ENCODE measurements at regions of chr20 and their contacts with region 1.

Region 1: DNA sequence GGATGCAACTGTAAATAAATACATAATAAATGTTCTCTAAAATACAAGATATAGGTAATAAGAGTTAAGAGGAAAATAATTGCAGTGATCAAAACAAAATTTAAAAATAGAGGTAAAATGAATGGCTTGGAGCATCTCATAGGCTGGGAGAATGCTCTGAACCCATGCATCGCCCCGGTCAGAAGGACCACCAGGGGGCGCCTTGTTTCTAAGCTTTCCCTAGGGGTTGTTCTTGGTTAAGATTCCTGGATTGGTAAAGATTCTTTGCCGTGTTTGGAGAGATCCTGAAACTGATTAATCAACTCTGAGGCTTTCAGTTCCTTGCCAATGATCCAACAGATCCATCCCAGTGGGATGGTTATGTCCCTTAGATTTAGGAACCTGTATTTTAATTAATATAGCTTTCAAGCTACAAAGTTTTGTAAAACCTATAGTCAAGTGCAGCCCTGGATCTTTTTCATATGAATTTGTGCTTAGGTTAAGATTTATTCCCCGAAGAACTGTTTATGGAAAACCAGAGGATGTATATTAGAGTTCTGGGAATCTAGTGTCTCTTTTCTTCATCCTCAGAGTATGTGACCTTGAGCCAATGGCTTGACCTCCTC is 45.3 kb upstream of the PRELID3B start:
- DNase-seq: peak; percentile 69 to 83 (median 77)
- H3K4me3 ChIP-seq: no peak overlapping the region
- H3K27ac ChIP-seq: no peak overlapping the region
- H3K4me1 ChIP-seq: no peaks in the 10 kb centered on the region
- H3K27me3 ChIP-seq: peaks cover 0 to 6% (median 0%) of the 10 kb centered on the region in 5 experiments

Region 2: DNA sequence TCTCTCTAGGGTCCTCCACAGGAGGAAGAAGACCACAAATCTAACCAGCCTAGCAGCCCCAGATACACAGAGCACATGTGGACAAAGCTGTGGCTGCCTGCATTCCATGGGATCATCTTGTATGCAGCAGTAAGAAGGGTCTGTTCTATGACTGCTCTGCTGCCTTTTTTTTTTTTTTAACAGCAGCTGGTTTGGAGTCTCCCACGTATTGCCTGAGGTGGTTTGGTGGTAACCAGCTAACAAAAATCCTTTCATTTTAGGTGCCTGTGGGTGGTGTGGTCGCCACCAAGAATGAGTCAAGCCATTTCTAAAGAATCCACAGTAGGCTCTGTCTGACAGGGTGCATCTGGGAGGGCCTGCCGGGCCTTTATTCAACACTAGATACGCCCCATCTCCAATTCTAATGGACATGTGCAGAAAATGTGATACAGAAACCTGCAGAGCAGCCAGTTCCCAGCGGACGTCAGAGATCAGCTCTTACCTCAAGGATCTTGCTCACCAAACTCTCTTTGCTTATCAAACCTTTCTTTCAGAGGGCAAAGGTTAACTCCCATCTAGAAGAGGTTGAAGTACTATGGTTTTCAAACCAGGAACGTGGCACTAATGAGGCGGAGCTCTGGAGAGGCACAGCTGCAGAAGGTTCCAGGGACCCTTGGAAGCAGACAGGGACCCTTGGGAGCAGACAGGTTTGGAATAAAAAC is 269.2 kb before region 1 on chr20:
- CTCF ChIA-PET with region 1: no interaction called
- POLR2A ChIA-PET with region 1: no interaction called
- DNase-seq: no peak
- H3K4me3 ChIP-seq: no peak overlapping the region
- H3K27ac ChIP-seq: no peak overlapping the region
- H3K4me1 ChIP-seq: no peaks in the 10 kb centered on the region
- H3K27me3 ChIP-seq: peaks cover 0 to 3% (median 0%) of the 10 kb centered on the region in 5 experiments

Region 3: GRCh38 chr20:59191756-59192532 is 104.0 kb after region 1 on chr20:
- CTCF ChIA-PET with region 1: no interaction called
- POLR2A ChIA-PET with region 1: no interaction called
- DNase-seq: no peak
- H3K4me3 ChIP-seq: no peak overlapping the region
- H3K27ac ChIP-seq: no peak overlapping the region
- H3K4me1 ChIP-seq: no peaks in the 10 kb centered on the region
- H3K27me3 ChIP-seq: peaks cover 0 to 27% (median 1%) of the 10 kb centered on the region in 5 experiments

Region 4: DNA sequence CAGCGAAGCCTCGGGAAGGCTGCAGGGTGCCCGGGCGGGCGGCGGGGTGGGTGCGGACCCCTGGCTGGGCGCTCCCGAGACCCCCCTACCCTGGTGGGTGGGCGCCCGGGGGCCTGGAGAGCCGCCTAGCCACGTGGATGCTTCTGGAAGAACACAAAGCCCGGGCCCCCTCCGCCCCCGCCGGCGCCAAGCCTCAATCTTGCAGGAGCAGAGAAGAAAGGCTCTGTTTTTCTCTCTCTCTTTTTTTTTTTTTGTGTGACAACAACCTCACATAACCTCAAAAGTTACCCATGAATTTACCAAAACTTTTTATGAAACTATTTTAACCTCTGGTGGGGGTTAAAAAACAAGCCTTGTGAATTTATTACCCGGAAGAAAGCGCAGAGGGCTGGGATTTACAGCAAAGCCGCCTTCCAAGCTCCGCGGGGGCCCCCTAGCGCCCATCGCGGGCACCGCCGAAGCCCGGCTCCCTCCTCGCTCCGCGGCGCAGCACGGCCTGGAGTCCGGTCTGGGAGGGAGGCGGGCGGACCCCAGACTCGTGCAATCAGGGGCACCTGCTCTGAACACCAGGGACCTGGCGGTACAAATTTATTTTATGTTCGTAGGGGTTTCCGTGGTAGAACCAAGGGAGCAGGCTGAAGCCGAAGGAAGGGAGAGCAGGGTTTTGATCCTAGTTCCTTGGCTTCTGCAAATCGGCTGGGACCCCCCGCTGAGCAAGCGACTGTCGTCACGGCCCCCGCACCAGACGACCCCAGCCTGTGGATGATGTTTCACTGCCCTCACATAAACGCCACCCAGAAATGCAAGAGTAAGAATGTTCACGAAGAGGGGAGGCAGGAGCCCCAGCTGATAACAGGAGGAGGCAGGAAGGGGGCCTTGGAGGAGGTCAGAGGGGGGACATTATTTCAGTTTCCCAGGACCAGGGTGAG is 134.6 kb after region 1 on chr20:
- CTCF ChIA-PET with region 1: interaction called, 19 read pairs
- POLR2A ChIA-PET with region 1: no interaction called
- DNase-seq: peak; percentile 72 to 86 (median 83)
- H3K4me3 ChIP-seq: peak overlapping the region in 6 of 7 experiments; percentile 35 to 71 (median 62)
- H3K27ac ChIP-seq: no peak overlapping the region
- H3K4me1 ChIP-seq: peaks cover 0 to 18% (median 10%) of the 10 kb centered on the region in 4 experiments
- H3K27me3 ChIP-seq: peaks cover 0 to 55% (median 7%) of the 10 kb centered on the region in 5 experiments

Region 5: DNA sequence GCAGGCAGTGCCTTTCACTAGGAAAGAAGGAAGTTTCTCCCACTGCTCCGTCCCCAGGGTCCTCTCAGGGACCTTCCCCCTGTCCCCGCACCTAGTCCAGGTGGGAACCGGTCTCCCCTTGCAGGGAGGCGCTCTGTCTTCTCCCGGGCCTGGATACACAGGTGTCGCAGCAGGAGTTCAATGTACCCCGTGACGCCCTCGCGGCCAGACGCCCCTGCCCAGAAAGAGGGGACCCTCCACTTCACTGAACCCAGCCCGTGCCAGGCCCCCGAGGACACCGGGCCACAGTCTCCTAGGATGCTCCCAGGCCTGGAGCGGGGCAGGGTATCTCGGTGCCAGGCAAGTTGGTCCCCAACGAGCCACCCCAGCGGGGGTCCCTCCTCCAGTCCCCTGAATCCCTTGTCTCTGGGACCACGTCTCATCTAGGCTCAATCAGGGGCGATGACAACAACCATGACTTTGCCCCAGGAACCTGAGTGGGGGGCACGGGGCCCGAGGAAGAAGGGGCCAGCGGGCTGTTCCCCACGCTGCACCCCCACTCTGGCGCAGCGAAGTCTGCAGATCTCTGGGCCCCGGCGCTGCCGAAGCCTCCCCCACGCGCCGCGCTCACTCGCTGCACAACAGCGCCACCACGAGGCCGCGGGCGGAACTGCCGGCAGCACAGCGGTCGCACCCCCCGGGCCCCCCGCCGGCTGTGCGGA is 315.5 kb after region 1 on chr20:
- CTCF ChIA-PET with region 1: interaction called, 12 read pairs
- POLR2A ChIA-PET with region 1: no interaction called
- DNase-seq: peak; percentile 41 to 72 (median 71)
- H3K4me3 ChIP-seq: peak overlapping the region in 4 of 7 experiments; percentile 28 to 60 (median 44)
- H3K27ac ChIP-seq: no peak overlapping the region
- H3K4me1 ChIP-seq: peaks cover 1 to 21% (median 17%) of the 10 kb centered on the region in 4 experiments
- H3K27me3 ChIP-seq: peaks cover 0 to 86% (median 28%) of the 10 kb centered on the region in 5 experiments

Measured in common myeloid progenitor, CD34-positive (primary cell).